ENCODE measurements at regions of chr6 and their contacts with region 1.

Region 1: DNA sequence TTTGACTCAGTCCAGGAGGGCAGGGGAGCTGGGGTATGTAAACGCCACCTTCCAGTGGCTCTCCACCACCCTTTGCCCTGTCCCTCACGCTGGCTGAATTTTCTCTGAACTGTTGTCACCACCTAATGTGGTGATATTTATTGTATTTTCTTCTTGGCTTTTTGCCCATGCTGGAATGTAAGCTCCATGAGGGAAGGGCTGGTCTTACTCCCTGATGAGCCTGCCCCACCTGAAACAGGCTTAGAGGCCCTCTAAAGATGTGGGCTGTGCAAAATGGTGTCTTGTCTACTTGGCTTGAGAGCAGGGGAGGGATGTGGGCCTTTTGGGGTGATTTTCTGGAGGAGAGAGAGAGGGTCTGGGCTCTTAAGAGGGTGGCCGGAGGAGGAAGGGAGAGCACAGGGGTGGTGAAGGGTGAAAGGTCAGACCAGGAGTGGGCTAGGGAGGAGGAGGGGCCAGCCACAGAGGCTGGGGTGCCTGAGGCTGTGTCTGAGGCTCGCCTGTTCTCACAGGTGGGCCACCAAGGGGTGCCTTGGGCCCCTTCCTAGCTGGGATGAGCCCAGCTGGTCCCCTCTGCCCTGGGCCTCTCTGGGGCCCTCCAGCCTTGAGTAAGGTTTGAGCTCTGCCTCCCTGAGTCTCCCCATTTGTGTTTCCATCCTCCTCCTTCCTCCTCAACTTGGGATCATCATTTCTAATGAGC is 37.3 kb downstream of the SPDEF start:
- DNase-seq: no peak
- ATAC-seq: no peak
- H3K4me3 ChIP-seq: no peak overlapping the region
- H3K27ac ChIP-seq: no peak overlapping the region
- H3K4me1 ChIP-seq: no peaks in the 10 kb centered on the region
- H3K27me3 ChIP-seq: no peaks in the 10 kb centered on the region; a peak in 1 of 4 replicates
- CTCF ChIP-seq: no peak
- EP300 ChIP-seq: no peak
- POLR2A ChIP-seq: no peak
- RAD21 ChIP-seq: no peak

Region 2: DNA sequence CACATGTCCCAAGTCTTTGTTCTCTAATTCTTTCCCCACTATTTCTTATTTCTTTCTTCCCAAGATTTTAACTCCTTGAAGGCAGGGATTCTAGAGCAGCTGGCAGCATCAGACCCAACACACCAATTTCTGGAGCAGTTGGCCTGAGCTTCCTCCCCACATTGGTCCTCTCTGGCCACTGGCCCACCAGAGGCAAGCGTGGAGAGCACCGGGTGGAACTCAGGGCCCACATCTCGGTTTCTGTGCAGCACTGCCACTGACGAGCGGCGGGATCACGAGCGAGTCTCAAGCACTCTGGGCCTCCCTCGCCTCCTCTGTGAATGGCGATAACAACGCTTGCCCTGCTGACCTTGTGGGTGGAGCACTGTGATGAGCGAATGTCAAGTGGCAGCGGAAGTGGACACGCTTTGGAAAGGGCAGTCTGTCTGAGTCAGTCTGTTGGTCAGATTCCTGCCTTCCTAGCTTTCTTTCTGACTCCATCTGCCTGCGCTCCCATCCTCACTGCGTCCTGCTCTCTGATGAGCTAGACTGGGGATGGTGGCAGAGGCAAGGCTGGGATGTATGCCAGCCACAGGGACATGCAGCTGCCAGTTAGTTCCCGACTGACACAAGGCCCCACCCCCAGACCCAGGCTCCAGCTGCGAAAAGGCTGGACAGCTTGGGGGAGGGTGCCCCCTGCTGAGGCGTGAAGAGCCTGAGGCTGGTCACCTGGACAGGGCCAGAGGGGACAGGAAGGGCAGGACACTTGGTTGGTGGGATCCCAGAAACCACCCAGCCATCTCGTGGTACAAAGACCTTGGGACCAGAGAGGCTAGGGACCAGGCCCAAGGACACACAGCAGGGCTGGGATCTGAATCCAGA is 41.8 kb after region 1 on chr6:
- CTCF ChIA-PET with region 1: no interaction called
- POLR2A ChIA-PET with region 1: no interaction called
- RAD21 ChIA-PET with region 1: no interaction called
- SMC1A ChIA-PET with region 1: no interaction called
- in situ Hi-C with region 1: no loop called
- intact Hi-C with region 1: no loop called
- DNase-seq: no peak
- ATAC-seq: no peak
- H3K4me3 ChIP-seq: no peak overlapping the region
- H3K27ac ChIP-seq: no peak overlapping the region
- H3K4me1 ChIP-seq: no peaks in the 10 kb centered on the region
- H3K27me3 ChIP-seq: no peaks in the 10 kb centered on the region; a peak in 1 of 4 replicates
- CTCF ChIP-seq: no peak; a peak in 1 of 6 replicates
- EP300 ChIP-seq: no peak
- POLR2A ChIP-seq: no peak
- RAD21 ChIP-seq: 0 out of 2 replicates have a peak, but pooled peaks have one; percentile 3

Region 3: GRCh38 chr6:34723203-34723602 is 204.4 kb after region 1 on chr6:
- CTCF ChIA-PET with region 1: no interaction called
- POLR2A ChIA-PET with region 1: interaction called, 10 read pairs
- RAD21 ChIA-PET with region 1: no interaction called
- SMC1A ChIA-PET with region 1: no interaction called
- in situ Hi-C with region 1: no loop called
- intact Hi-C with region 1: no loop called
- DNase-seq: no peak
- ATAC-seq: no peak
- H3K4me3 ChIP-seq: no peak overlapping the region
- H3K27ac ChIP-seq: no peak overlapping the region
- H3K4me1 ChIP-seq: no peaks in the 10 kb centered on the region
- H3K27me3 ChIP-seq: no peaks in the 10 kb centered on the region
- CTCF ChIP-seq: no peak
- EP300 ChIP-seq: no peak
- POLR2A ChIP-seq: no peak
- RAD21 ChIP-seq: no peak